H1 (cell line): ENCODE measurements at regions of chr11 and their contacts with region 1.

Region 1: DNA sequence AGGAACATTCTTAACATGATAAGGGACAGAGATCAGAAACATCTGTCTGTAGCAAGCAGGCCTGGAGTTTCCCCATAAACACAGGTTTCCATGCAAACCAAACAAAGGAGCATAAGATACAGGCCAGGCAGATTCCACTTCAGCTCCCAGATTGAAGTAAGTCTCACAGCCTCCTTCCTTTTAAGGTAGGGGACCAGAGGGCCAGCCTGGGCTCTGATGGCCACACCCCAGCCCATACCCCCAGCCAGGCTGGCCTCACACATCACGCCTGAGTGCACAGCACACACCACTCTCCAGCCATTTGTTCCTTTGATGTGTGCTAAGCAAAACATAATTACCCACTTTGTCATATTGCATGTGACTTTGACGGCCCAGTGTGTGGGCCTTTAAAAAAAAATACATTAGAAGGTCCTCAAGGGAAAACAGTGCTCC is 518.7 kb downstream of the NTM start:
- DNase-seq: no peak
- H3K4me3 ChIP-seq: peak overlapping the region in 1 of 4 experiments; percentile 24; a peak in 1 of 8 replicates
- H3K27ac ChIP-seq: peak overlapping the region; percentile 69
- H3K4me1 ChIP-seq: peaks cover 20 to 36% (median 29%) of the 10 kb centered on the region in 4 experiments
- H3K27me3 ChIP-seq: no peaks in the 10 kb centered on the region
- CTCF ChIP-seq: no peak
- EP300 ChIP-seq: 0 out of 3 replicates have a peak, but pooled peaks of 1 of the 2 experiments have one; percentile 55
- POLR2A ChIP-seq: no peak; a peak in 1 of 3 replicates
- RAD21 ChIP-seq: no peak

Region 2: DNA sequence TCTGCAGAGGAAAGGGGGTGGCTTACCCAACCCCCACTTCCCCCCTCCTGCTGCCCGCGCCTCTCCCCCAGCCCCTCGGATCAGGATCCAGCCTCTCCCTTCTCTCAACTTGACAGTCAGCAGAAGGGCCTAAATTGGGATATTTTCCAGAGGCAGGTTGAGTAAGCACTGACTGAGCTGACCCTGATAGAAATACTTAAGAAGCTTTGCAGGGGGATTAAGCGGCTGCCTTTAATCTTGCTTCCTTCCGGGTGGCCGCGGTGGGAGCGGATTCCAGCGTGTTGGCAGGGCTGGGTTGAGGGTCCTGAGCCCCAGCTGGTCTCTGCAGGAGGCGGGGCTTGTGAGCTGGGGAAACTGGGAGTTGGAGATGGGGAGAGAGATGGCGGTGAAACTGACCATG is 73.6 kb before region 1 on chr11:
- CTCF ChIA-PET with region 1: no interaction called
- POLR2A ChIA-PET with region 1: no interaction called
- DNase-seq: no peak
- H3K4me3 ChIP-seq: no peak overlapping the region
- H3K27ac ChIP-seq: no peak overlapping the region
- H3K4me1 ChIP-seq: peaks cover 4 to 21% (median 9%) of the 10 kb centered on the region in 4 experiments
- H3K27me3 ChIP-seq: no peaks in the 10 kb centered on the region
- CTCF ChIP-seq: no peak
- EP300 ChIP-seq: no peak
- POLR2A ChIP-seq: no peak
- RAD21 ChIP-seq: no peak

Region 3: DNA sequence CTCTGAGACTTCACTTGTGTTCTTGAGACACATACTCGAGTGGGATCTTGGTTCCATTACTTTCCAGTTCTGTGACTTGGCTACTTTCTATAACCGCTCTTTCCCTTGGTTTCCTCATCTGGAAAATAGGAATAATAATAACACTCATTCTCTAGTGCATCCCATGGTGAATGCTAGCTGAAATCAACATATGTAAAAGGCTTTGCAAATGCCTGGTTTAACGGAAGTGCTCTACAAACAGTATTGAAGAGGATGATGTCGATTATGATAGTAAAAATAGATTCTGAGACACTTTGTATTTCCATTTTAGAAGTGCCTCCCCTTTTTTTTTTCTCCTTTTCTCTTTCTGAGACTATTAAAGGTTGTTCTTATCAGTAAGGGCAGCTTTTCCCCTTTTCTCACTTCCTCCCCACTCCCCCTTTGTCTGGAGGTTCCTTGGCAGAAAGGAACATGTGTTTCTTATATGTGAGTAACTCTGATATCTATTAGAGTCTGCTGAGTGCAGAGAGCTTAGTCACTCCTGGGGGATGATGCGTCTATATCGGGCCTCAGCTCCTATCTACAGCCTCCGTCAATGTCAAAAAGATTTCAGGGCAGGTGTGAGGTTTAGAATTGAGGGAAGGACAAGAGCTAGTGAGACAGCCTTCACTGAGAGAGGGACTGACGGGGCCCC is 29.5 kb before region 1 on chr11:
- CTCF ChIA-PET with region 1: interaction called, 310 read pairs
- POLR2A ChIA-PET with region 1: no interaction called
- DNase-seq: no peak
- H3K4me3 ChIP-seq: no peak overlapping the region
- H3K27ac ChIP-seq: no peak overlapping the region
- H3K4me1 ChIP-seq: peaks cover 2 to 10% (median 6%) of the 10 kb centered on the region in 4 experiments; a peak in 6 of 7 replicates
- H3K27me3 ChIP-seq: no peaks in the 10 kb centered on the region
- CTCF ChIP-seq: no peak
- EP300 ChIP-seq: no peak
- POLR2A ChIP-seq: no peak
- RAD21 ChIP-seq: no peak

Region 4: GRCh38 chr11:131867457-131868257 is 21.5 kb before region 1 on chr11:
- CTCF ChIA-PET with region 1: interaction called, 310 read pairs
- POLR2A ChIA-PET with region 1: no interaction called
- DNase-seq: peak; percentile 68 to 86
- H3K4me3 ChIP-seq: no peak overlapping the region
- H3K27ac ChIP-seq: no peak overlapping the region
- H3K4me1 ChIP-seq: peaks cover 18 to 33% (median 20%) of the 10 kb centered on the region in 4 experiments
- H3K27me3 ChIP-seq: no peaks in the 10 kb centered on the region
- CTCF ChIP-seq: peak; percentile 91 to 98 (median 96)
- EP300 ChIP-seq: no peak
- POLR2A ChIP-seq: no peak
- RAD21 ChIP-seq: peak; percentile 96

Region 5: DNA sequence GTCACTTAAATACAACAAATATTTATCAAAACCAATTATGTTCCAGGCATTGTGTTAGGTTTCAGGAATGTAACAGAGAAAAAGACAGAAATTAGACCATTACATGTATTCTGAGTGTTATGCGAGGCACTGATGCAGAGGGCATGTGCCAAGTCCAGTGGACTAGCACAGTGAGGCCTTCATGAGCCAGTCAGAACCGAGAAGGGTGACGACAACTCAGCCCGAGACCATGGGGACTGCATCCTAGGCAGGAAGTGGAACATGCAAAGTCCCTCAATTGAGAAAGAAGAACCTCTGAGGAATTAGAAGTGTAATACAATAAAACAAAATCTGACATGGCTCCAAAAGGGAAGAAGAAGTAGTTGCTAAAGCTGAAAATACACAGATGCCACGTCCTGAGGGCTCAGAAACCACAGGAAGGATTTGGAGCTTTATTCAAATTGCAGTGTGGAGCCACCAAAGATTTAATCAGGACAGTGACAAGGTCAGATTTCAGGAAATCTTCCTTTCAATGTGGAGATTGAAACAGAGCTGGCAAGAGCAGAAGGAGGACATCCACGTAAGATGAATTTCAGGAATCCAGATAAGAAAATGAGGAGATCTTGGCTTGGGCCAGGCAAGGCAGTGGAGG is 10.9 kb after region 1 on chr11:
- CTCF ChIA-PET with region 1: interaction called, 27 read pairs
- POLR2A ChIA-PET with region 1: interaction called, 3 read pairs
- DNase-seq: no peak
- H3K4me3 ChIP-seq: no peak overlapping the region
- H3K27ac ChIP-seq: no peak overlapping the region
- H3K4me1 ChIP-seq: peaks cover 0 to 8% (median 0%) of the 10 kb centered on the region in 4 experiments; a peak in 2 of 7 replicates
- H3K27me3 ChIP-seq: no peaks in the 10 kb centered on the region
- CTCF ChIP-seq: no peak
- EP300 ChIP-seq: no peak
- POLR2A ChIP-seq: no peak
- RAD21 ChIP-seq: no peak

Region 6: DNA sequence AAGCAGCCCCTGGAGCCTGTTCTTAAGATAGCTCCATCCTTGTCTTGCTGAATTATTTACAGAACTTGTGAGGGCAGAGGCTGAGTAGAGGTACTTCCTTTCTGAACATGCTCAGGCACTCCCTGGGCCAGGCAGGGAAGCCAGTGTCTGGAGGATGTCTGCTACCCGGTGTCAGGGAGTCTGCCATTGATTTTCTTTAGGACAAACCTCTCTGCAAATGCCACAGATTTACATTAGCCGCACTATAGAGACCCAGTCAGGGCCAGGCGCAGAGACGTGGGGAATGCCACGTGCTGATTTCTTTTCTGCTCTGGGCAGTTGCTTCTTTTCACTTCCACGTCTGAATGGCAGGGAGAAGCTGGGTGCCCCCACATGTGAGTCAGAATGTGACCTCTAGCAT is 66.7 kb after region 1 on chr11:
- CTCF ChIA-PET with region 1: no interaction called
- POLR2A ChIA-PET with region 1: no interaction called
- DNase-seq: no peak
- H3K4me3 ChIP-seq: no peak overlapping the region
- H3K27ac ChIP-seq: no peak overlapping the region
- H3K4me1 ChIP-seq: peaks cover 1 to 12% (median 10%) of the 10 kb centered on the region in 4 experiments; a peak in 5 of 7 replicates
- H3K27me3 ChIP-seq: no peaks in the 10 kb centered on the region
- CTCF ChIP-seq: no peak
- EP300 ChIP-seq: no peak
- POLR2A ChIP-seq: no peak
- RAD21 ChIP-seq: no peak

Region 7: GRCh38 chr11:132020001-132020400 is 130.8 kb after region 1 on chr11:
- CTCF ChIA-PET with region 1: no interaction called
- POLR2A ChIA-PET with region 1: no interaction called
- DNase-seq: no peak
- H3K4me3 ChIP-seq: no peak overlapping the region
- H3K27ac ChIP-seq: no peak overlapping the region
- H3K4me1 ChIP-seq: peaks cover 0 to 3% (median under 1%) of the 10 kb centered on the region in 4 experiments; a peak in 2 of 7 replicates
- H3K27me3 ChIP-seq: no peaks in the 10 kb centered on the region
- CTCF ChIP-seq: no peak
- EP300 ChIP-seq: no peak
- POLR2A ChIP-seq: no peak
- RAD21 ChIP-seq: no peak